ENCODE measurements at regions of chr1 and their contacts with region 1.

Region 1: GRCh38 chr1:118151312-118151937 is 33.6 kb downstream of the SPAG17 start:
- DNase-seq: peak; percentile 52
- H3K4me3 ChIP-seq: no peak overlapping the region
- H3K27ac ChIP-seq: no peak overlapping the region
- H3K4me1 ChIP-seq: no peaks in the 10 kb centered on the region
- H3K27me3 ChIP-seq: no peaks in the 10 kb centered on the region
- CTCF ChIP-seq: peak; percentile 54

Region 2: GRCh38 chr1:118077331-118078055 is 73.9 kb before region 1 on chr1:
- intact Hi-C with region 1: loop called (anchors 2 kb)
- DNase-seq: peak; percentile 19
- H3K4me3 ChIP-seq: no peak overlapping the region
- H3K27ac ChIP-seq: no peak overlapping the region
- H3K4me1 ChIP-seq: no peaks in the 10 kb centered on the region
- H3K27me3 ChIP-seq: no peaks in the 10 kb centered on the region
- CTCF ChIP-seq: peak; percentile 24

Region 3: DNA sequence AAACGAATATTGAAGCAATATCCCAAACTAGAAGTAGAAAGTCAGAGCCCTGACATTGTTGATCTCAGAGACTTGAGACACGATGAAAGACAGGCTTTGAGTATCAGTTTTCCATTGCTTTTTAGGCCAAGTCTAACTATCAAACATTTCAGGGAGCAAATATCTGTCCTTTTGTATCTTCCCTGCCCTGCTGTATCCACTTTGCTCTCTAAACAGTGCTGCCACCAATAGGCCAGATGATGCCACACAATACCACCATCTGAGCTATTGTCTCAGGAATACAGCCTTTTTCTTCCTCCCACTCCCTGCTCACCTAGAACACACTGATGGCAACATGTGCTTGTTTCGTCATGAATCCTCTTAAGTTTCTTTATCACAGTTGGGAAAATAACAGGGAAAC is 96.2 kb after region 1 on chr1:
- intact Hi-C with region 1: no loop called
- DNase-seq: no peak
- H3K4me3 ChIP-seq: no peak overlapping the region
- H3K27ac ChIP-seq: no peak overlapping the region
- H3K4me1 ChIP-seq: no peaks in the 10 kb centered on the region
- H3K27me3 ChIP-seq: no peaks in the 10 kb centered on the region
- CTCF ChIP-seq: peak; percentile 16

Region 4: DNA sequence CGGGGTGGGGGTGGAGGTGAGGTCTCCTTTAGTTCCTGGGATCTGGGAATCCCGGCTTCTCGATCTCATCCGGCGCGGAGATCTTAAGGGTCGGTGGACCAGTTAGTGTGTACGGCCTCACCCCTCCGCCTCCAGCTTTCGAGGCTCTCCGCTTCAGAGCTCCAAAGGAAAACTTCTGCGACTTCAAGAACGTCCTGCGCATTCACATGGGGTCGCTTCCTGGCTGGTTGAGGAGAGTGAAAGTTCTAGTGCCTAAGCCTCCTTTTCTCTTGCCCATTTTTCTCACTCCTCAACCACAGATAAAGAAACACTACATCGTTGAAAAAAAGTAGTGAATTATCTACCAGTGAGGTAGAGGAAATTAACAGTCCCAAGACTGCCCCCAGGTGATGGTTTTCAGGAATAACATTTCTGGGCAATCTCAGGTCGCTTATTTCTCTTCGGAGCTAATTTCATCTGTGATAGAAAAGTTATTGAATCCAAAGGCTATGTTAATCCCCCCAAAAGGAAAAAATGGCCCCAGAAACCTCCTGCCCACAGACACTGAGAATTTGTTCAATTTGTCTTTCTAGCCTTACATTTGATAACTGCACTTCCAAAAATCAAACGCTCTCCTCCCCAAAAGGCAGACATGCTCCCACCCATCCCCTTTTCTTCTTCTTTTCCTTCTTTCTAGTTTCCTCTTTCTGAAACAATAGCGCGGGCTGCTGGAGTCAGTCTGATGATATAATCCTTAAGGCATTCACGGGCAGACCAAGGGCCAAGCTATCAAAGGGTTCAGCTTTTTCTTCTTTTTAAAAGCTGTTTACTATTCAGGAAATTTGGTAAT is 857.3 kb after region 1 on chr1:
- intact Hi-C with region 1: loop called (anchors 5 kb)
- DNase-seq: peak; percentile 49
- H3K4me3 ChIP-seq: peak overlapping the region; percentile 0
- H3K27ac ChIP-seq: no peak overlapping the region
- H3K4me1 ChIP-seq: no peaks in the 10 kb centered on the region
- H3K27me3 ChIP-seq: peaks cover 43% of the 10 kb centered on the region
- CTCF ChIP-seq: peak; percentile 49

Region 5: GRCh38 chr1:119367427-119368124 is 1216.2 kb after region 1 on chr1:
- intact Hi-C with region 1: loop called (anchors 10 kb)
- DNase-seq: no peak
- H3K4me3 ChIP-seq: no peak overlapping the region
- H3K27ac ChIP-seq: no peak overlapping the region
- H3K4me1 ChIP-seq: no peaks in the 10 kb centered on the region
- H3K27me3 ChIP-seq: no peaks in the 10 kb centered on the region
- CTCF ChIP-seq: peak; percentile 85

Measured in colonic mucosa (tissue), 4 donors.